Activated naive CD4-positive, alpha-beta T cell treated with anti-CD3 and anti-CD28 coated beads for 36 hours (primary cell): ENCODE measurements at regions of chr6 and their contacts with region 1.

Region 1: DNA sequence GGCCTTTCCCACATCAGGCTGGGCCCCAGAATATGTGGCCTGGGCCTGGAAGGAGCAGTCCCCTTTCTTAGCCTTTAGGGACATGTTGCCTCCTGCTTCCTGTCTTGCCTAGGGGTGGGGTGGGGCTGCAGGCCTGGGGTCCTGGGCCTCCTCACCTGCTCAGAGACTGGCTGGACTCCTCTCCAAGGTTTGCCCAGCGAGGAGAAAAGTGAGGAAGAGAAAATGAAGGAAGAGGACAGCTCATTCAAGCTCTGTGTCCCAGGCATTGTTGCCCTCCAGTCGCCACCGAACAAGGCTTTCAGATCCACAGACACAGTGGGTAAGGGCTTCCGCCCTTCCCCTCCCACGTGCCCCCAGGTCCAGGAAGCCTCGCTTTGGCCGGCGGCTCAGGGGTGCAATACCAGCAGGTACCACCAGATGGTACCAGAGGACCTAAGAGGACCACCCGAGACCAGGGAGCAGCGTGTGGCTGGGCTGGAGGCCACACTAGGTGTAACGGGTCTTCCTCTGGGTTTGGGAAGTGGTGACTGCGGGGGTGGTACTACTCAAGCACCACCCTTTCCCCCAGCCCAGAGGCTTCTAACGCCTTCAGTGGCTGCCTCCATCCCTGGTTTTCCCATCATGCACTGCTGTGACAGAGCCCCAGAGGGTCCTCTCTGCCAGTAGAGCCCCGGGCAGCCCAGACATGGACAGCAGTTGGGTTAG is 5.5 kb upstream of the BAK1 start:
- DNase-seq: peak; percentile 94
- H3K4me3 Mint-ChIP-seq: peak overlapping the region; percentile 66
- H3K27ac Mint-ChIP-seq: peak overlapping the region; percentile 82
- H3K4me1 Mint-ChIP-seq: peaks cover 19% of the 10 kb centered on the region
- H3K27me3 Mint-ChIP-seq: no peaks in the 10 kb centered on the region

Region 2: GRCh38 chr6:33597551-33598322 is 12.2 kb after region 1 on chr6:
- CTCF ChIA-PET with region 1: interaction called, 11 read pairs
- intact Hi-C with region 1: no loop called
- DNase-seq: no peak
- H3K4me3 Mint-ChIP-seq: no peak overlapping the region
- H3K27ac Mint-ChIP-seq: no peak overlapping the region
- H3K4me1 Mint-ChIP-seq: peaks cover 36% of the 10 kb centered on the region
- H3K27me3 Mint-ChIP-seq: no peaks in the 10 kb centered on the region

Region 3: GRCh38 chr6:33607784-33608161 is 22.2 kb after region 1 on chr6:
- CTCF ChIA-PET with region 1: interaction called, 46 read pairs
- intact Hi-C with region 1: loop called (anchors 1 kb)
- DNase-seq: peak; percentile 70
- H3K4me3 Mint-ChIP-seq: no peak overlapping the region
- H3K27ac Mint-ChIP-seq: no peak overlapping the region
- H3K4me1 Mint-ChIP-seq: no peaks in the 10 kb centered on the region
- H3K27me3 Mint-ChIP-seq: no peaks in the 10 kb centered on the region

Region 4: GRCh38 chr6:33633462-33634158 is 48.1 kb after region 1 on chr6:
- CTCF ChIA-PET with region 1: interaction called, 7 read pairs
- intact Hi-C with region 1: loop called (anchors 1 kb)
- DNase-seq: peak; percentile 40
- H3K4me3 Mint-ChIP-seq: peak overlapping the region; percentile 74
- H3K27ac Mint-ChIP-seq: peak overlapping the region; percentile 27
- H3K4me1 Mint-ChIP-seq: peaks cover 61% of the 10 kb centered on the region
- H3K27me3 Mint-ChIP-seq: no peaks in the 10 kb centered on the region

Region 5: DNA sequence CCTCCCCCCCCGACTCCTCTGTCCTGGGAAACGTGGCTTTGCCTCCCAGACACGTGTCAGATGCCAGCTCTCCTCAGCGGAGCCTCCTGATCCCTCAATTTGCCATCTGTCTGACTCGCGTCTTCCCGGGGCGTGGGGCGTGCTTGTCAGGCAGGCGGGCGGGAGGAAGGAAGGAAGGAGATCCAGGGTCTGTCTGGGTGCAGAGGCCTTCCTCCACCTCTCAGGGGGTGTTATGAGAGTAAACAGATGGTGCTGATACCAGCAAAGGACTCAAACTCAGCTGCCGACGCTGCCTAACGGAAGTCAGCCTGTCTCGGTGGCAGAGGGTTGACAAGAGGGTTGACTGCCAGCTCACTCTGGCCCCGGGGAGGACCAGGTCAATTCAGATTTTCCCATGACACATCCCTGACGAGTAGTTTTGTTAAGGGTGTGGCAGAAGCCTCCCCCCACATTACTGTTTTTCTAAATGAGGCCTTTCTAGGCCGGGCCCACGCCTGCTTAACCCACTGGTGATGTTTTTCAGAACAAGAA is 108.9 kb after region 1 on chr6:
- CTCF ChIA-PET with region 1: interaction called, 10 read pairs
- intact Hi-C with region 1: loop called (anchors 1 kb)
- DNase-seq: peak; percentile 86
- H3K4me3 Mint-ChIP-seq: peak overlapping the region; percentile 4
- H3K27ac Mint-ChIP-seq: peak overlapping the region; percentile 86
- H3K4me1 Mint-ChIP-seq: peaks cover 80% of the 10 kb centered on the region
- H3K27me3 Mint-ChIP-seq: no peaks in the 10 kb centered on the region

Region 6: DNA sequence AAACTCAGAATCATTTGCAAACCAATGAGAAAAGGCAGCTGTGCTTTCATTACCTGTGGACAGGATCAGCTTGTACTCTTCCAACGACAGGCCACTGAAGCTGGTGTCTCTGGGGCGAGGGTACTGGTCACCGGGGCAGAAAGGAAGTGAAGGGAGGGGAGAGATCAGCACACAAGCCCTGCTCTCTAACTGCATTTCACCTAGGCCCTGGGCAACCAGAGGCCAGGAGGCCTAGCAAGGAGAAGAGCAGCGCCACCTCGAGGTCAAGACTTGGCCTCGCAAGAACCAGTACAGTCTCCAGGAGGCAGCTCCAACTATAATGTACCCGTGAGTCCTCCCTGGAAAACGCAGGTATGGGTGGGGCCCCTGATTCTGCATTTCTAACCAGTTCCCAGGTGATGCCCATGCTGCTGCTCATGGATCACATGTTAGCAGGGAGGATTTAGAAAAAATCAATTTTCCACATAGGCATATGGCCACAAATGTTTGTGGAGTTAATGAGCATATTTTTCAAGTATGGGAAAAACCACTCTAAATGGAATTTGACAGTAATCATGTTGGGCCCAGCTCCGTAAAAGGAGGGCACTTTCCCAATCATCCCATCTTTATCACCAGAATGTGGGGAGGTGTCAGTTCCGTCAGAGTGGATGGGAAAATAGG is 115.0 kb after region 1 on chr6:
- CTCF ChIA-PET with region 1: interaction called, 13 read pairs
- intact Hi-C with region 1: loop called (anchors 1 kb)
- DNase-seq: peak; percentile 89
- H3K4me3 Mint-ChIP-seq: no peak overlapping the region
- H3K27ac Mint-ChIP-seq: peak overlapping the region; percentile 26
- H3K4me1 Mint-ChIP-seq: peaks cover 49% of the 10 kb centered on the region
- H3K27me3 Mint-ChIP-seq: no peaks in the 10 kb centered on the region

Region 7: GRCh38 chr6:33761922-33762629 is 176.5 kb after region 1 on chr6:
- CTCF ChIA-PET with region 1: interaction called, 3 read pairs
- intact Hi-C with region 1: loop called (anchors 1 kb)
- DNase-seq: peak; percentile 73
- H3K4me3 Mint-ChIP-seq: no peak overlapping the region
- H3K27ac Mint-ChIP-seq: no peak overlapping the region
- H3K4me1 Mint-ChIP-seq: no peaks in the 10 kb centered on the region
- H3K27me3 Mint-ChIP-seq: no peaks in the 10 kb centered on the region